Right cardiac atrium (tissue), 5 donors: ENCODE measurements at regions of chr4 and their contacts with region 1.

Region 1: DNA sequence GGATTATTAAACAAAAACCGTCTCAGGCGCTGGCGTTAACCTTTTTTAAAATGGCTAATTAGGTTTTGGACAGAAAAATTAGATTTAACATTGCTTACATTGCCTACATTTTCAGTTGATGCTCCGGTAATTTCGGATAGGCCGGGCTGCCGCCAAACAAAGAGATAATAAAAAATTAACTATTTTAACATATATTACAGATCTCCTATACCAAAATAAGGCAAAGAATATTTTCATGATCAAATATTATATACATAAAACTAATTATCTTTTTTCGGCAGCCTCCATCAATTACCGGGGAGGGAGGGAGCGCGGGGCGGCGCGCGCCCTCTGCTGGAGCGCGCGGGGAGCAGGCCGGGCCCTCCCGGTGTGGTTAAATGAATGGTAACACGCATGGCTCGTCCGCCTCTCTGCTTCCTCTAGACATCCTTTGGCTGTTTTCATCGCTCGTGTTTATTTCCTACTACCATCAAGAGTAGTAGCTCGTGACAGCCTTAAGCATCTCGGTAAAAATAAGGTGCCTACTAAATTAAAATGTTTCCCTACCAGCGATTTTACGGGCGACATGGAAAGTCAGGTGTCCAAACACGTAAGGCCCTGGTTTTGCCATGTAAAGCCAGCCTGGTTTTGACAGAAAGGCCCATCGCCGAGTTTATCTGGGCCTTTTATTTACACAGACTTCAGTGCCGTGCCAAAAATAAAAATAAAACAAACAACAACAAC is 52.4 kb upstream of the TMEM33 start:
- DNase-seq: peak in 2 of 3 donors; percentile 74 to 76
- ATAC-seq: peak; percentile 81 to 83
- H3K4me3 ChIP-seq: peak overlapping the region; percentile 61
- H3K27ac ChIP-seq: no peak overlapping the region
- H3K4me1 ChIP-seq: peaks cover 5% of the 10 kb centered on the region
- H3K27me3 ChIP-seq: no peaks in the 10 kb centered on the region

Region 2: DNA sequence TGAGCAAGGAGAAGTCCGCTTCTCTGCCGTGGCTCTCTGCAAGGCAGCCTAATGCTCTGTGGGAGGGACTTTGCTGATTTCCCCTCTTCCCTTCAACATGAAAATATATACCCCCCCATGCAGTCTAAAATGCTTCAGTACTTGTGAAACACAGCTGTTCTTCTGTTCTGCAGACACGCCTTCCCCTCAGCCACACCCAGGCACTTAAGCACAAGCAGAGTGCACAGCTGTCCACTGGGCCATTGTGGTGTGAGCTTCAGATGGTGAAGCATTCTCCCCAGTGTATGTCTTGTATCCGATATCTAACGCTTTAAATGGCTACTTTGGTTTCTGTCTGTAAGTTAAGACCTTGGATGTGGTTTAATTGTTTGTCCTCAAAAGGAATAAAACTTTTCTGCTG is 614.8 kb before region 1 on chr4:
- intact Hi-C with region 1: loop called in 1 of 4 experiments (anchors 10 kb)
- DNase-seq: no peak
- ATAC-seq: no peak
- H3K4me3 ChIP-seq: no peak overlapping the region
- H3K27ac ChIP-seq: no peak overlapping the region
- H3K4me1 ChIP-seq: no peaks in the 10 kb centered on the region
- H3K27me3 ChIP-seq: no peaks in the 10 kb centered on the region

Region 3: DNA sequence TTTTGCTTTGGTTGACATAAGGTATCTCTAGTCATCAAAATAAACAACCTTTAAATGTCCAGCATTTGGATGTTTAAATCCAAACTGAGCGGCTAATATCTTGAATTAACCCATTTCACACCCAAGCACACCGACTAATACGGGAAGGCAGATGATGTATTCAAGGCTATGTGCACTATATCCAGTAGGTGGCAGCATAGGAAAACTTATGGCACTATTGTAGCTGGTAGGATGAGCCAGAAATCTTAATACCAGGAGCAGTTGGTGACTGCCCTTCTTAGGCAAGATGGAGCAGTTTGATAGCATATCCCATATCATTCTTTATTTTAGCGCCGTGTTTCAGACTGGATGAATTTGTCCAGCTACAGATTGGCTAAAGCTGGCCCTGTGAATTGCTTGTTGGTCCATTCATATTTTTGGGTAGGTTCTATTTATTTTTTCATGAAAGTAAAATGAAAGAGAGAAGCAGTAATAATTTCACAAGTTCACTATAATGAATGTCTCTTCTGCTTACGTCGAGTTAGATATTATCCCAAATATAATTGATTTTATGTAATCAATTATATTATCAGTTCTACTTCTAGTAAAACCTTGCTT is 601.6 kb before region 1 on chr4:
- intact Hi-C with region 1: loop called in 1 of 4 experiments (anchors 10 kb)
- DNase-seq: no peak
- ATAC-seq: peak; percentile 96
- H3K4me3 ChIP-seq: no peak overlapping the region
- H3K27ac ChIP-seq: no peak overlapping the region
- H3K4me1 ChIP-seq: no peaks in the 10 kb centered on the region
- H3K27me3 ChIP-seq: no peaks in the 10 kb centered on the region

Region 4: DNA sequence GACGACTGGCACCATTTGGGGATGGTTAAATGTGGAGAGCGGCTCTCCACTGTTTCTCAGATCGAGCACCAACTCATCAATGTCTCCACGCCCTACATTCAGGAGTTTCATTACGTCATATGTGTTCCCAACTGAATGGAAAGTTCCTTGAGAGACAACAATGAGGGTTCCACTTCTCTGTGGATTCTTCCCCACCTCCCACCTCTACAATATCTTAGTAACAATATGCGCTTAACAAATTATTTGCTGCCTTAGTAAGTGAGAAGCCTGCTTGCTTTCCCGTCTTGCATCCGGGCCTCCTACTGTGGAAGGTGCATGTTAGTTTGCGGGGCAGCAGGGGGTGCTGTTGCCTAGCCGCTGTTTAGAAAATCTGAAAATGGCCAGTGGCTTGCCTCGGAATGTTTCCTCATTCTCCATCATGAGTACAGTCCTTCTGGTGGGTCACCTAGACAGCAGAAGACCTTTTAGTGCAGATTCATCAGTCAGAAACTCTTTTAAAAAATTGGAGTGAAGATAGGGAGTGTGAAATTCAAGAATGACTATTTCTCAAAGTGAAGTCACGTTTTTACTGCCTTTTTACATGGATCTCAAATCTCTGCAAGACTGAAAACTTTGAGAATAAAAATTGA is 190.0 kb before region 1 on chr4:
- intact Hi-C with region 1: loop called (anchors 5 kb)
- DNase-seq: peak; percentile 31 to 65 (median 43)
- ATAC-seq: peak; percentile 71 to 73
- H3K4me3 ChIP-seq: no peak overlapping the region
- H3K27ac ChIP-seq: no peak overlapping the region
- H3K4me1 ChIP-seq: no peaks in the 10 kb centered on the region
- H3K27me3 ChIP-seq: no peaks in the 10 kb centered on the region

Region 5: GRCh38 chr4:41734366-41734765 is 148.4 kb before region 1 on chr4:
- intact Hi-C with region 1: no loop called
- DNase-seq: no peak
- ATAC-seq: no peak
- H3K4me3 ChIP-seq: no peak overlapping the region
- H3K27ac ChIP-seq: no peak overlapping the region
- H3K4me1 ChIP-seq: no peaks in the 10 kb centered on the region
- H3K27me3 ChIP-seq: no peaks in the 10 kb centered on the region